ENCODE measurements at regions of chr9 and their contacts with region 1.

Region 1: GRCh38 chr9:123039617-123040219 is 6.3 kb downstream of the GPR21 start:
- DNase-seq: no peak
- H3K4me3 ChIP-seq: no peak overlapping the region
- H3K27ac ChIP-seq: peak overlapping the region; percentile 75 to 82
- H3K4me1 ChIP-seq: peaks cover 3 to 48% of the 10 kb centered on the region in 2 donors
- H3K27me3 ChIP-seq: no peaks in the 10 kb centered on the region
- CTCF ChIP-seq: no peak

Region 2: DNA sequence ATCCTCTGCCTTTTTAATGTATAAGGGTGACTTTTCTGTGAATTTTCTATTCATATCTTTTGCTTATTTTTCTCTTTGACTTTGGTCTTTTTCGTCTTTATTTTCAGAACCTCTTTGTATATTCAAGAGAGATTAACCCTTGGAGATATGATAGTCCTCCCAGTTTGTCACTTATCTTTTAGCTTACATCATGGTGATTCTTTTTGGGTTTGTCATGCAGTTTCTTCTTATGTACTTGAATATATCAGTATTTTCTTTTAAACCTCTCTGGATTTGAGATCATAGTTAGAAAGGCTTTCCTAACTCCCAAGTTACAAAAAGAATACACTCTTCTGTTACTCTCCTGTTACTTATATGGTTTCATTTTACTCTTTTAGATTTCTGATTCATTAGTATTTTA is 33.8 kb before region 1 on chr9:
- intact Hi-C with region 1: no loop called
- DNase-seq: no peak
- H3K4me3 ChIP-seq: no peak overlapping the region
- H3K27ac ChIP-seq: peak overlapping the region in 1 of 2 donors; percentile 33
- H3K4me1 ChIP-seq: peaks cover 0 to 12% of the 10 kb centered on the region in 2 donors
- H3K27me3 ChIP-seq: no peaks in the 10 kb centered on the region
- CTCF ChIP-seq: no peak

Region 3: DNA sequence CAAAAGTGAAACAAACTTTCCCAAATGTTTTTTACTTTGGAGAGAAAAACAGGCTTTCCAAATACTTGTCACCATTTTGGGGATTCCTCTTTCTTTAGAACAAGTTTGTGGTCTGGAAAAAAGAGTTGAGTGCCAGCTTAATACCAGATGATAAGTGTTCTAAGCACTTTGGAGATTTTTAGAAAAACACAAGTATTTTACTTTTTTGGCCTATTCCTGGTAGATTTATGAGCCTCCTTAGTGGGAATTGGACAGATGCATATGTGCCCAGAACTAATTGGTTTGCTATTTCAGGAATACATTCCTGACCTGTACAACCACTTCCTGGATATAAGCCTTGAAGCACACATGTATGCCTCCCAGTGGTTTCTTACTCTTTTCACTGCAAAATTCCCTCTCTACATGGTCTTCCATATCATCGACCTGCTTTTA is 34.3 kb after region 1 on chr9:
- intact Hi-C with region 1: loop called (anchors 2 kb)
- DNase-seq: no peak
- H3K4me3 ChIP-seq: peak overlapping the region in 1 of 2 donors; percentile 33
- H3K27ac ChIP-seq: peak overlapping the region; percentile 68 to 71
- H3K4me1 ChIP-seq: peaks cover 8 to 20% of the 10 kb centered on the region in 2 donors
- H3K27me3 ChIP-seq: no peaks in the 10 kb centered on the region
- CTCF ChIP-seq: no peak